WTC11 (cell line): ENCODE measurements at regions of chr15 and their contacts with region 1.

Region 1: GRCh38 chr15:70097337-70098169 is at the start of gene TLE3:
- DNase-seq: peak; percentile 98
- ATAC-seq: peak; percentile 36
- H3K4me3 Mint-ChIP-seq: peak within 1 kb of the TSS; percentile 98
- H3K27ac Mint-ChIP-seq: peak within 1 kb of the TSS; percentile 99
- H3K4me1 Mint-ChIP-seq: peaks cover 43% of the 10 kb centered on the region
- H3K27me3 Mint-ChIP-seq: peaks cover 25% of the 10 kb centered on the region
- CTCF ChIP-seq: no peak
- total RNA-seq, gene TLE3: 66.8 to 78.7 TPM (median 68.0 TPM) in 3 replicates

Region 2: GRCh38 chr15:70111203-70112073 is 13.9 kb after region 1 on chr15:
- CTCF ChIA-PET with region 1: interaction called, 29 read pairs
- POLR2A ChIA-PET with region 1: interaction called, 44 read pairs
- DNase-seq: peak; percentile 84
- ATAC-seq: peak; percentile 96
- H3K4me3 Mint-ChIP-seq: peak overlapping the region; percentile 65
- H3K27ac Mint-ChIP-seq: peak overlapping the region; percentile 87
- H3K4me1 Mint-ChIP-seq: peaks cover 27% of the 10 kb centered on the region
- H3K27me3 Mint-ChIP-seq: peaks cover 19% of the 10 kb centered on the region
- CTCF ChIP-seq: no peak

Region 3: DNA sequence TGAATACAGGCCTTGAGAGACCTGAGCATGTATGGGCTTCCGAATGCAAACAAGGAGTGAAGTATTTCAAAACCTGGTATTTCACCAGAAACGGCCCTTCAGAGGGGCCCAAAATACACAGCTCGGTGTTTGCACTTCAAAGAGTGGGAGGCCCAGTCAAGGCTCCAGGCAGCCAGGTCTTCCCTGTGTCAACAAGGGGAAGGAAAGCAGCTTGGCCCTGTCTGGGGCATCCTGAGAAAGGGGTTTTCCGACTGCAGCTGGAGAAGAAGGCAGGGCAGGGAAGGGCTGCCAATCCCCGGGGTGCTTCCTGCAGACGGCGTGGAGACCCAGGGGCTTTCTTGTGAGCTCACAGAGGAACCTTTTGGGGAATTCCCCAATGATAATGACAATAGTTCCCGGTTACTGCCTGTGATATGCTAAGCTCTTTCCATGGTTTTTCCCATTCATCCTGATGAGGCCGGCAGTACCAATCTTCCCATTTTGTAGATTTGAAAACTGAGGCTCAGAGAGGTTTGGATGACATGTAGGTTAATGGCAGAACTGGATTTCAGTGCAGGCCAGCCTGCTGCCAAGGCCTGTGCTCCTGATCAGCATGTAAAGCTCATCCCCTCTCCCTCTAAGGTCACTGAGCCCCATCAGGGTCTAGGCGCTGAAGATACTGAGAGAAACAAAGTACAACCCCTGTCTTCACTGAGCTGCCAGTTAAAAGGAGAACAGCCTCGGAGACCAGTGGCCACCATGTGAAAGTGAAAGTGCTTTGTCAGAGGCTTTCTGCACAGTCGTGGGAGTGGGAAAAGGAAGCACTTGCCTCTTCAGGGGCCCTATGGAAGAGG is 43.2 kb after region 1 on chr15:
- CTCF ChIA-PET with region 1: interaction called, 12 read pairs
- POLR2A ChIA-PET with region 1: interaction called, 31 read pairs
- DNase-seq: peak; percentile 64
- ATAC-seq: peak; percentile 88
- H3K4me3 Mint-ChIP-seq: no peak overlapping the region
- H3K27ac Mint-ChIP-seq: peak overlapping the region; percentile 45; the same call in 1 of the 2 replicates
- H3K4me1 Mint-ChIP-seq: peaks cover 50% of the 10 kb centered on the region
- H3K27me3 Mint-ChIP-seq: peaks cover 16% of the 10 kb centered on the region
- CTCF ChIP-seq: no peak

Region 4: DNA sequence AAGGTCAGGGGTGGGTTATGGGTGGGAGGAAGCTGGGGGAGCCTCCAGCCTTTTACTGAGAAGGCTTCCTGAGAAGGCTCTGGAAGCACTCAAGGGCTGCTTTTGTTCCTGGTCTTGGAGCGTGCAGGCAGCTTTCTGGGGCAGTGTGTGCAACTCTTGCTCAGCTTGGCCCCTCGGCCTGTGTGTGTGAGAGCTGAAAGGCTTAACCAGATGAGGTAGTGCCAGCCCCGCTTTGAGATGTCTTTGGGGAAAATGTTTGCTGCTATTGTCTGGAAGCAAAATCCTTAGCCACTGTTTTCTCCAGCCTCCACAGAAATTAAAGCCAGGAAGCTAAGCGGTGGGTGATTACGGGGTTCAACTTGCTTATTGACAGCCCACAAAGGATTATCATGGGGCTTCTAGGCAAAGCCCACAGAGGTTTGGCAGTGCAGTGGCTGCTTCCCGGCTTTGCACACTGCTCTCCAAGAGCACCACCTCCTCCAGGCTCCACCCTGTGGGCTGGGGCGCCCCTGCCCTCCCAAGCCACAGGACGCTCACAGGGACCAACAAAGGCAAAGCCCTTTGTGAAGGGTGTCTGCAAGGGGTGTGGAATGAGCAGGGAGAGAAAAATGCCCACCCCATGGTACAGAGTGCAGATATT is 121.8 kb after region 1 on chr15:
- CTCF ChIA-PET with region 1: no interaction called
- POLR2A ChIA-PET with region 1: no interaction called
- DNase-seq: no peak
- ATAC-seq: peak; percentile 65
- H3K4me3 Mint-ChIP-seq: no peak overlapping the region
- H3K27ac Mint-ChIP-seq: no peak overlapping the region
- H3K4me1 Mint-ChIP-seq: peaks cover 8% of the 10 kb centered on the region
- H3K27me3 Mint-ChIP-seq: no peaks in the 10 kb centered on the region
- CTCF ChIP-seq: no peak